Gastrocnemius medialis (tissue), 4 donors: ENCODE measurements at regions of chr10 and their contacts with region 1.

Region 1: DNA sequence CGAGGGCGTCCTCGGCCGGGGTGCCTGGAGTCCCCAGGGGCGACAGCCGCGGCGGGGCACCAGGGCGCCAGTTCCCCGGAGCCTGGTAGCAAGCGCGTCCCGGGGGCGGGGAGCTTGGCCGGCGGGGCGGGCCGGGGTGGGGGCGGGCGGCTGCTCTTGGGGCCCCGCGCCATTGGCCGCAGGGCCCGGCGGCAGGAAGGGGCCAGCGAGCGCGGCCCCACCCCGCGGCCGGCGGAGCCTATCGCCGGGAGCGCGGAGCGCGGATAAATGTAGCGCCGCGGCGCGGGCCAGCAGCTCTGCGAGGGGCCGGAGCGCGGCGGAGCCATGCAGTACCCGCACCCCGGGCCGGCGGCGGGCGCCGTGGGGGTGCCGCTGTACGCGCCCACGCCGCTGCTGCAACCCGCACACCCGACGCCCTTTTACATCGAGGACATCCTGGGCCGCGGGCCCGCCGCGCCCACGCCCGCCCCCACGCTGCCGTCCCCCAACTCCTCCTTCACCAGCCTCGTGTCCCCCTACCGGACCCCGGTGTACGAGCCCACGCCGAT is at the start of gene HHEX:
- DNase-seq: peak in 1 of 2 donors; percentile 16
- ATAC-seq: peak; percentile 37 to 39
- H3K4me3 ChIP-seq: peak within 1 kb of the TSS; percentile 56 to 73 (median 62)
- H3K27ac ChIP-seq: peak within 1 kb of the TSS; percentile 64 to 78 (median 74)
- H3K4me1 ChIP-seq: peaks cover 0 to 6% of the 10 kb centered on the region in 2 donors
- H3K27me3 ChIP-seq: peaks cover 36 to 53% (median 43%) of the 10 kb centered on the region in 3 donors
- CTCF ChIP-seq: no peak
- POLR2A ChIP-seq: peak; percentile 33 to 69
- total RNA-seq, gene HHEX: 0.82 to 1.8 (median 0.84) TPM in 3 of 4 donors, not detected in the other

Region 2: GRCh38 chr10:92592761-92593618 is 96.7 kb before region 1 on chr10 and contains the start of gene KIF11:
- in situ Hi-C with region 1: no loop called
- intact Hi-C with region 1: no loop called
- DNase-seq: peak; percentile 88 to 94
- ATAC-seq: peak; percentile 84 to 85
- H3K4me3 ChIP-seq: peak within 1 kb of the TSS; percentile 59 to 86 (median 80)
- H3K27ac ChIP-seq: peak within 1 kb of the TSS; percentile 79 to 89 (median 86)
- H3K4me1 ChIP-seq: peaks cover 7 to 13% of the 10 kb centered on the region in 2 donors
- H3K27me3 ChIP-seq: no peaks in the 10 kb centered on the region
- CTCF ChIP-seq: no peak
- POLR2A ChIP-seq: peak; percentile 64 to 82
- total RNA-seq, gene KIF11: 0.05 to 0.76 (median 0.35) TPM

Region 3: GRCh38 chr10:92712016-92712889 is 22.5 kb after region 1 on chr10:
- in situ Hi-C with region 1: no loop called
- intact Hi-C with region 1: no loop called
- DNase-seq: no peak
- ATAC-seq: no peak
- H3K4me3 ChIP-seq: no peak overlapping the region
- H3K27ac ChIP-seq: no peak overlapping the region
- H3K4me1 ChIP-seq: no peaks in the 10 kb centered on the region
- H3K27me3 ChIP-seq: no peaks in the 10 kb centered on the region
- CTCF ChIP-seq: no peak
- POLR2A ChIP-seq: no peak

Region 4: GRCh38 chr10:92799591-92800446 is 110.1 kb after region 1 on chr10:
- in situ Hi-C with region 1: no loop called
- intact Hi-C with region 1: no loop called
- DNase-seq: no peak
- ATAC-seq: no peak
- H3K4me3 ChIP-seq: no peak overlapping the region
- H3K27ac ChIP-seq: no peak overlapping the region
- H3K4me1 ChIP-seq: no peaks in the 10 kb centered on the region
- H3K27me3 ChIP-seq: no peaks in the 10 kb centered on the region
- CTCF ChIP-seq: no peak
- POLR2A ChIP-seq: no peak

Region 5: DNA sequence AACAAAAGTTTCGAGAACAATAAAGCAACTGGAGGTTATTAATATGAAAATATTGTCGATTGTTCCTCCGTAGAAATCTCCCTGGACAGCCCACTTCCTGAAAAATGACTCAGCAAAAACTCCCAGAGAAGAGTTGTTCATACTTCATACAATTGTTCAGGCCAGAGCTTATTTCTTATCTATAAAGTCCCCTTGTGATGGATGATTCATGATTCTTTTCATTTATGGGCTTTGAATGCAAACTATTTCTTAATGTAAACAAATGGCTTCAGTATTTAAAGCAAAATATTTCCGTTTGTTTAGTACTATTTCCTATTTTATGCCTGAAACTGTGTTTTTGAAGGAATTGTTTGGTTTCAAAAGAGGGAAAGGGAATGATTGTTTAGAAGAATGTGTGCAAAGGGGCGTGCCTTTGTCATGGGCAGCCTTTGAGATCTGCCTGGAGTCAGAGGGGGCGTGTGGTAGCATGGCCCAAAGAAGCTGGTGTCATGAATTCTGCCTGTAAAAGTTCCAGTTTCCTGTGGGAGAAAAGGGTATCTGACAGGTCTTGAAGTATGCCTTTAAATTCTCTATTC is 132.4 kb after region 1 on chr10:
- in situ Hi-C with region 1: no loop called
- intact Hi-C with region 1: loop called (anchors 10 kb)
- DNase-seq: no peak
- ATAC-seq: peak in 1 of 2 donors; percentile 61
- H3K4me3 ChIP-seq: no peak overlapping the region
- H3K27ac ChIP-seq: peak overlapping the region in 3 of 4 donors; percentile 25 to 58 (median 33)
- H3K4me1 ChIP-seq: no peaks in the 10 kb centered on the region
- H3K27me3 ChIP-seq: no peaks in the 10 kb centered on the region
- CTCF ChIP-seq: no peak
- POLR2A ChIP-seq: no peak